ENCODE measurements at regions of chr3 and their contacts with region 1.

Region 1: DNA sequence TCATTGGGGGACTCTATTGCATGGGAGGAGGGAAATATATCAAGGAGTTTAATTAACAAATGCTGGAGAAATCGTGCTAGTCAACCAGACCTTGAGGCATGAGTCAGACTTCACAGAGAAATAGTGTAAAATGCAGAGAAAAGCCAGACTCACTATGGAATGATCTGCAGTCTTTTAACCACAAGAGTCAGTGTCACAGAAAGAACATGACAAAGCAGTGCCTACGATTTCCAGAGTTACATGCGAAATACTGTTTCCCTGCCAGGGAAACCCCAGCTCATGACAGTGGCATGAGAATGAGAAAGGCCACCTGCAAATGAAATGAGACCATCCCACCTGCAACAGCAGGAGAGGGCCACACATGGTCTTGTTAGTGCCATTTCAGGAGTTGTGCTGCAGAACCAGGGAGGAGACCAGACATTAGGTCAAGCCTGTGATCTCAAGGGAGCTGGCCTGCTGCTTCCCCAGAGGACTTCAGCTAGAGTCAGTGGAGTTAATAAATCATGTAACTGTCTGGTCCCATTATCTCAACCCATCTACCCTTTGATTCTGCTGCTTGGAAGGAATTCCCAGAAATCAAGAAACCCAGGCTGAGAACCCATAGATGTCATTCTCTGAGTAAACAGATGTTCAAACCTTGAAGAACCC is 79.0 kb downstream of the ERC2 start:
- DNase-seq: no peak
- H3K4me3 ChIP-seq: no peak overlapping the region
- H3K27ac ChIP-seq: no peak overlapping the region
- H3K27me3 ChIP-seq: no peaks in the 10 kb centered on the region
- CTCF ChIP-seq: no peak

Region 2: GRCh38 chr3:56408761-56409196 is 19.5 kb after region 1 on chr3:
- intact Hi-C with region 1: no loop called
- DNase-seq: peak in 1 of 10 donors; percentile 63
- H3K4me3 ChIP-seq: no peak overlapping the region
- H3K27ac ChIP-seq: peak overlapping the region in 1 of 59 donors; percentile 17
- H3K27me3 ChIP-seq: no peaks in the 10 kb centered on the region
- CTCF ChIP-seq: no peak

Region 3: GRCh38 chr3:56424885-56425284 is 35.6 kb after region 1 on chr3:
- intact Hi-C with region 1: loop called in 1 of 2 experiments (anchors 5 kb)
- DNase-seq: no peak
- H3K4me3 ChIP-seq: no peak overlapping the region
- H3K27ac ChIP-seq: peak overlapping the region in 6 of 59 donors; percentile 5 to 42 (median 14)
- H3K27me3 ChIP-seq: no peaks in the 10 kb centered on the region
- CTCF ChIP-seq: no peak